Dorsolateral prefrontal cortex (tissue), 120 donors: ENCODE measurements at regions of chrX and their contacts with region 1.

Region 1: GRCh38 chrX:44244008-44244407 is 99.5 kb downstream of the EFHC2 start:
- DNase-seq: no peak
- H3K4me3 ChIP-seq: no peak overlapping the region
- H3K27ac ChIP-seq: peak overlapping the region in 18 of 59 donors; percentile 12 to 56 (median 36)
- H3K27me3 ChIP-seq: peaks cover 0 to 83% (median 36%) of the 10 kb centered on the region in 45 donors
- CTCF ChIP-seq: peak; percentile 15 to 85 (median 65)

Region 2: DNA sequence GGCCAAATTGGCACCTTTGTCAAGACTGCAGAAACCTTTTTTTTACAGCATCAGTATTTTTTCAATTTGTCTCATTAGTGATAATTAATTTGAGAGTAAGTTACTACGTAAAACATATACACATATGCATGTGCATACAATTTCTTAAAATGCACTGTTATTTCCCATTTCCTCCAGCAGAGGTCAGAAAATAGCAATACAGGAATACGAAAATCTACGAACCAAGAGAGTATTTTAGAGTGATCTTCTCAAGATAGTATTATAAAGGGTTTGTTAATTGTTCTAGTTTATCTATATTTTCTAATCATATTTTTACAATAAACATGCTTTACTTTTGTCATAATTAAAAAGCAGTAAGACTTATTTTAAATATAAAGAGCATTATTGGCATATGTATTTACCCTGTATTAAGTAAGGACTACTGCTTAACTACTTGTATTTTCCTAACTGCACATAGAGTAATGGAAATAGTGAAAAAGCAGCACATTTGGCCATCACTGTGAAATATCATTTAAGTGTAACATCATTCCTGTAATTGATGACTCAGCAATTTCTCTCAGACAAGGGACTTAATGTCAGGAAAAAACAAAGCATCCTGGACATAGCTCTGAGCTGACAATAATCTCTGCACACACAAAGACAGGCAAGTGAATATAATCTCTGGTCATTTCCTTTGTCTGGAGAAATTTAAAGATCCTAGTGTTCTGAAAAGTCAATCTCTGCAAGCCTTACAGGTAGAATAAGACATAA is 407.4 kb before region 1 on chrX:
- intact Hi-C with region 1: loop called (anchors 5 to 10 kb)
- DNase-seq: no peak
- H3K4me3 ChIP-seq: no peak overlapping the region
- H3K27ac ChIP-seq: no peak overlapping the region
- H3K27me3 ChIP-seq: peaks cover 0 to 66% (median 9%) of the 10 kb centered on the region in 45 donors
- CTCF ChIP-seq: peak; percentile 34 to 82 (median 69)

Region 3: DNA sequence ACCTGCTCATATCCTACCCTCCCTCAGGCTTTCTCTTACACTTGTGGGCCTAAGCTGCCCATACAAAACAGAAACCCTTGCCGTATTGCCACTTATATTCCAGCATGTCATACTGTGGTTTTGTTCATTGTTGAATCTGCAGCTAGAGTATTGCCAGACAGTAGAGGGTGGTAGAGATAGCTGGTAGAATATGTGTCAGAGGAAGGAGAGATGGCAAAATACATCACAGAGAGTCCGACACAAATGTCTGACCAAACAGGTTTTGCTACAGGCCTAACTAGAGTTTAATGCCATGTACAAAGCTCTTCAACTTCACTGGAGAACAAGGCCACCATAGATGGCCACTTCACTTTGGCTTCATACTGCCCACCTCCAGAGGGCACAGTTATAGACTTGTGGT is 60.7 kb before region 1 on chrX:
- intact Hi-C with region 1: loop called in 1 of 2 experiments (anchors 5 kb)
- DNase-seq: no peak
- H3K4me3 ChIP-seq: peak overlapping the region in 4 of 59 donors; percentile 18 to 32 (median 22)
- H3K27ac ChIP-seq: peak overlapping the region in 6 of 59 donors; percentile 20 to 64 (median 31)
- H3K27me3 ChIP-seq: peaks cover 0 to 31% (median 3%) of the 10 kb centered on the region in 45 donors
- CTCF ChIP-seq: peak in 44 of 56 donors; percentile 6 to 64 (median 38)

Region 4: DNA sequence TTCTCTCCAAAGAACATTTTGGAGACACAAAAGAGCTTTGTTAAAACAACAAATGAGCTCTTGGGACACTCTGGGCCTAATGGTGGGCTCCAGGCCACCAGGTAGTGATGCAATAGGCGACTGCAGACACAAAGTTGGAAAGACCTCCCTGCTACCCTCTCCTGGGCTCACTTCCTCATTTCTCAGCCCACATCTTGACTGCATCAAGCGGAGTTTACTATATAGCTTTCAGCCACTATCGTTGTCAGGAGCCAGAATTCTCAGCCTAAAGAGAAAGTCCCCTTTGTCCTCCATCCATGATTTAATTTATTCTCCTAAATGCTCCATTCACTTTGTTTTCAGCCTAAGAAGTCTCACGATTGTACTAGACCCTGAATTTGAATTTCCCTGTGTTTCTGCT is 15.4 kb before region 1 on chrX:
- intact Hi-C with region 1: no loop called
- DNase-seq: peak in 1 of 10 donors; percentile 37
- H3K4me3 ChIP-seq: peak overlapping the region in 7 of 59 donors; percentile 3 to 31 (median 13)
- H3K27ac ChIP-seq: peak overlapping the region in 58 of 59 donors; percentile 9 to 93 (median 78)
- H3K27me3 ChIP-seq: peaks cover 0 to 48% (median 7%) of the 10 kb centered on the region in 45 donors
- CTCF ChIP-seq: no peak

Region 5: GRCh38 chrX:44305921-44306735 is 62.1 kb after region 1 on chrX:
- intact Hi-C with region 1: no loop called
- DNase-seq: no peak
- H3K4me3 ChIP-seq: no peak overlapping the region
- H3K27ac ChIP-seq: no peak overlapping the region
- H3K27me3 ChIP-seq: peaks cover 0 to 61% (median 12%) of the 10 kb centered on the region in 45 donors
- CTCF ChIP-seq: no peak